Caco-2 (cell line): ENCODE measurements at regions of chr17 and their contacts with region 1.

Region 1: GRCh38 chr17:59435238-59435637 is 103.8 kb downstream of the YPEL2 start:
- DNase-seq: no peak
- H3K4me3 ChIP-seq: no peak overlapping the region
- H3K4me3 Mint-ChIP-seq: no peak overlapping the region
- H3K27ac Mint-ChIP-seq: no peak overlapping the region
- H3K4me1 ChIP-seq: peaks cover 7% of the 10 kb centered on the region; the same call in 1 of the 2 replicates
- H3K4me1 Mint-ChIP-seq: peaks cover 7% of the 10 kb centered on the region
- H3K27me3 ChIP-seq: no peaks in the 10 kb centered on the region
- H3K27me3 Mint-ChIP-seq: no peaks in the 10 kb centered on the region
- CTCF ChIP-seq: no peak

Region 2: DNA sequence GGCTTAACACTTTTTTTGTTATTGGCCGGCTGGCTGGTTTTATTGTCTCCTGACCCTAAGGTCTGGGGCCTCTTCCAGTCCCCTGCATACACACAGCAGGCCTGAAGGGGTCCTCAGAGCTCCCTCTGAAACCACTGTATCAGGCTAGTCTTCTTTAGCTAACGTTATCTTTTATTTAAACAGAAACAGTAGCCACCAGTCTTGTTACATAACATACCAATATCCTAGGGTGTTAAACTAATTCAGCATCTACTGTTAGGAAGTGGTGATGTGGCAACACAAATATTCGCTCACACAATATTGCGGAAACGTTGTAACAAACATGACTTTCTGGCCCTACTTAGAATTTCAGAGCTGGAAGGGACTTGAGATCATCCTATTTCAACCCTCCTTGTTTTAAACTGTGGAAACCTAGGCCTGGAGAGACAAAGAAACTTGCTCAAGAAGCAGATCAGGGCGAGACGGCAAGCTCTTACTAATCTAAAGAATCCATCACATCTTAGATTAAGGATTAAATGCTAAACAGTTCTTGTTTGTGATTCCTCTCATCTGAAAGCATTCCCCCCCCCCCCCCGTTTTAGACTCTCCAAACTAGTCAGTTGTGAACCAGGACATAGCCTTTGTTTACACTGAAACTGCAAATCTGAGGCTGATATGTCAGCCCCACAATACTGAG is 105.5 kb before region 1 on chr17:
- CTCF ChIA-PET with region 1: interaction called, 19 read pairs
- POLR2A ChIA-PET with region 1: no interaction called
- intact Hi-C with region 1: loop called (anchors 1 kb)
- DNase-seq: peak; percentile 80 to 82
- H3K4me3 ChIP-seq: peak overlapping the region; percentile 90
- H3K4me3 Mint-ChIP-seq: peak overlapping the region; percentile 73
- H3K27ac Mint-ChIP-seq: peak overlapping the region; percentile 29
- H3K4me1 ChIP-seq: peaks cover 21% of the 10 kb centered on the region
- H3K4me1 Mint-ChIP-seq: peaks cover 26% of the 10 kb centered on the region
- H3K27me3 ChIP-seq: no peaks in the 10 kb centered on the region
- H3K27me3 Mint-ChIP-seq: peaks cover 4% of the 10 kb centered on the region
- CTCF ChIP-seq: peak; percentile 89 to 92